ENCODE measurements at regions of chr17 and their contacts with region 1.

Region 1: DNA sequence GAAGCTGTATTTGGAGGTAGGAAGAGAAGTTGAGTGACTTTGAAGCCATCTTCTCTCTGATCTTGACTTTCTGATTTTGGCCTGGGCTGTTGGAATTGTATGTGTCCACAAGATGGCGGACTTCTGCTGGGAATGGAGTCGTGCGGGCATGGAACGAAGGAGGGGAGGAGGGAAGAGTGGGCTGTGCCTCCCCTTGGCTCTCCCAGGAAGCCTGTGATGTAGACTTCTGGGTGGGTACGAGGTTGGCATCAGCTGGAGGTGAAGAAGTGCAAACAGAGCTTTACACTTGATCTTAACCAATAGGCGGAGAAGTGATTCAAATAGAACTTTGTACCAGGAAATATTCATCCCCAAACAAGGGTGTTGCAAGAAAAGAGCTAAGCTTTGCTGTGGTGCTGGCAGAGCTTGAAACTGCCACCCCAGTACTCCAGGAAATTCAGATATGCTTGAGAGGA is 7.4 kb upstream of the TMEM220 start:
- DNase-seq: peak; percentile 88 to 90
- H3K4me3 ChIP-seq: no peak overlapping the region
- H3K27ac ChIP-seq: no peak overlapping the region
- H3K4me1 ChIP-seq: peaks cover 12% of the 10 kb centered on the region
- H3K27me3 ChIP-seq: no peaks in the 10 kb centered on the region
- CTCF ChIP-seq: peak; percentile 51 to 82 (median 69)
- POLR2A ChIP-seq: no peak

Region 2: DNA sequence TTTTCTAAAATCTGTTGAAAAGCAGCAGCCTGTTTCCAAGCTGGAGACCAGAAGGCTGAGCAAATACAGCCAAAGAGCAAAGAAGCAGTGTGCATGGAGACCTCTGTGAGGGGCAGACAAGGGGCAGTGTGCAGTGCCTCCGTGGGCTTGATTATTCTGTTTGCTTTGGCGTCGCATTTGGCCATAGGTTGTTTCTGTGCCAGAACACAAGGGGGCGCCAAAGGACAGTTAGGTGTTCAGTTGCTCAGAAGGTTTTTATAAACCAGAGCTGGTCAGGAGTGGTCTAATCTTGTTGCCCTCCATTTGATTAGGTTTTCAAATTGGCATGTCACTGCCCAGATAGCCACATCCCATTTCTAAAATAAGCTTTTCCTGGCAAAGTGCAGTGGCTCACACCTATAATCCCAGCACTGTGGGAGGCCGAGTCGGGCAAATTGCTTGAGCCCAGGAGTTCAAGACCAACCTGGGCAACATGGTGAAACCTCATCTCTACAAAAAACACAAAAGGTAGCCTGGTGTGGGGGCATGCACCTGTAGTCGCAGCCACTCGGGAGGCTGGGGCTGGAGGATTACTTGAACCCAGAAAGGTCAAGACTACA is 90.7 kb before region 1 on chr17:
- intact Hi-C with region 1: no loop called
- DNase-seq: no peak
- H3K4me3 ChIP-seq: no peak overlapping the region
- H3K27ac ChIP-seq: no peak overlapping the region
- H3K4me1 ChIP-seq: no peaks in the 10 kb centered on the region
- H3K27me3 ChIP-seq: no peaks in the 10 kb centered on the region
- CTCF ChIP-seq: peak; percentile 51 to 76 (median 57)
- POLR2A ChIP-seq: no peak

Region 3: GRCh38 chr17:10702574-10702973 is 34.6 kb before region 1 on chr17:
- intact Hi-C with region 1: no loop called
- DNase-seq: no peak
- H3K4me3 ChIP-seq: no peak overlapping the region
- H3K27ac ChIP-seq: no peak overlapping the region
- H3K4me1 ChIP-seq: peaks cover 20% of the 10 kb centered on the region
- H3K27me3 ChIP-seq: no peaks in the 10 kb centered on the region
- CTCF ChIP-seq: no peak
- POLR2A ChIP-seq: no peak

Region 4: GRCh38 chr17:10777890-10778289 is 40.7 kb after region 1 on chr17:
- intact Hi-C with region 1: no loop called
- DNase-seq: no peak
- H3K4me3 ChIP-seq: no peak overlapping the region
- H3K27ac ChIP-seq: no peak overlapping the region
- H3K4me1 ChIP-seq: no peaks in the 10 kb centered on the region
- H3K27me3 ChIP-seq: no peaks in the 10 kb centered on the region
- CTCF ChIP-seq: no peak
- POLR2A ChIP-seq: no peak

Region 5: DNA sequence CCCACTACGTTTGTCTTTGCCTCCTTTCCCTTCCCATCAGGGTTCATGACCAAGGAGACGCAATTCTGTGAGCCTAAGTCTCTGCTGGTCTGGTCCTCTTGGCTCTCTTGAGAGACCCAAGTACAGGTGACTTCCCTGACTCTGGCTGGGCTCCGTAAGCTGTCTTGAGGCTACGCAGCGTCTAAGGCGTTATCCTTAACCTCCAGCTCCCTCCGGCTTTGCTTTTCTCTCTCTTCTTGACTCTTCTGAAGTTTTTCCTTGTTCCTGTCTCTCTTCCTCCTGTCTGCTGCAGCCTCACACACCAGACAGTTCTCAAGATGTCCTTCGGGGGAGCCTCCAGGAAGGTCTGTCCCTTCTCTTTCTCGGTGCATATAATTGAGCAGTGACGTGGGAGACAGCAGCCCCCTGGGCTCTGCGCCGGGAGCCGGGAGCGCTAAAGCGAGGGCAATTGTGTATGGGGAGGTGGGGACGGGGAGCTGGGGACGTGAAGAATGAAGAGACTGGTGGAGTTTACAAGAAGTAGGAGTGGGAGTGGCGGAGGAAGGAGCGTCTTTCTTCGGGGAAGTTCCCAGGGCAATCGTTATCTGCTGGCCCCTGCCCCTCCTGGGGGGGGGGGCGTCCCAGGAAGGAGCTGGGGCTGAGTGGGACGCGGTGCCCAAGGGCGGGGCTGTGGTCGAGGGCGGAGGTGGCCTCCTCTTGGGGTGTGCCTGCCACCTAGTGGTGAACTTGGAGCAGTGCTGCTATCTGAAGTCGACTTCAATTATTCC is 107.6 kb after region 1 on chr17:
- intact Hi-C with region 1: loop called (anchors 5 kb)
- DNase-seq: no peak
- H3K4me3 ChIP-seq: peak overlapping the region; percentile 43 to 46
- H3K27ac ChIP-seq: peak overlapping the region; percentile 45
- H3K4me1 ChIP-seq: no peaks in the 10 kb centered on the region
- H3K27me3 ChIP-seq: no peaks in the 10 kb centered on the region
- CTCF ChIP-seq: peak; percentile 87 to 99 (median 94)
- POLR2A ChIP-seq: no peak